ENCODE measurements at regions of chr17 and their contacts with region 1.

Region 1: DNA sequence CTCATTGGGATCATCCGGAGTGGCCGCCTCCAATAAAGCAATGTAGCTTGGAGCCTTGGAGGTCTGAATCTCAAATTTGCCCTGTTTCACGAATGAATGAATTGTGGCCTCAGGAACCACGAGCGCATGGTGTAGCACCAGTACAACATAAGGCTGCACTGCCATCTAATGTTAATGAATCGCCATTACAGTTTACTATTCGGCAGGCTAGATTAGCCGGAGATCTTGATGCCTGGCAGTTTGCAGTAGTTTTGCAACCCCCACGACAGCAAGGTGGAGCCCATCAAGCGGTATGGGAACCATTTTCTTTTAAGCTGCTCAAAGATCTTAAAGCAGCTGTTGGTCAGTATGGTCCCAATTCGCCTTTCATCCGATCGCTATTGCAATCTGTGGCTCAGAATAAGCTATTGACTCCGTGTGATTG is 18.8 kb downstream of the ALOX15B start:
- DNase-seq: peak; percentile 26 to 31
- ATAC-seq: peak; percentile 89 to 91
- H3K4me3 ChIP-seq: no peak overlapping the region
- H3K27ac ChIP-seq: no peak overlapping the region
- H3K4me1 ChIP-seq: peaks cover 5 to 6% of the 10 kb centered on the region in 2 donors
- H3K27me3 ChIP-seq: peaks cover 25 to 43% (median 40%) of the 10 kb centered on the region in 3 donors
- CTCF ChIP-seq: peak; percentile 40 to 80 (median 79)
- POLR2A ChIP-seq: no peak

Region 2: DNA sequence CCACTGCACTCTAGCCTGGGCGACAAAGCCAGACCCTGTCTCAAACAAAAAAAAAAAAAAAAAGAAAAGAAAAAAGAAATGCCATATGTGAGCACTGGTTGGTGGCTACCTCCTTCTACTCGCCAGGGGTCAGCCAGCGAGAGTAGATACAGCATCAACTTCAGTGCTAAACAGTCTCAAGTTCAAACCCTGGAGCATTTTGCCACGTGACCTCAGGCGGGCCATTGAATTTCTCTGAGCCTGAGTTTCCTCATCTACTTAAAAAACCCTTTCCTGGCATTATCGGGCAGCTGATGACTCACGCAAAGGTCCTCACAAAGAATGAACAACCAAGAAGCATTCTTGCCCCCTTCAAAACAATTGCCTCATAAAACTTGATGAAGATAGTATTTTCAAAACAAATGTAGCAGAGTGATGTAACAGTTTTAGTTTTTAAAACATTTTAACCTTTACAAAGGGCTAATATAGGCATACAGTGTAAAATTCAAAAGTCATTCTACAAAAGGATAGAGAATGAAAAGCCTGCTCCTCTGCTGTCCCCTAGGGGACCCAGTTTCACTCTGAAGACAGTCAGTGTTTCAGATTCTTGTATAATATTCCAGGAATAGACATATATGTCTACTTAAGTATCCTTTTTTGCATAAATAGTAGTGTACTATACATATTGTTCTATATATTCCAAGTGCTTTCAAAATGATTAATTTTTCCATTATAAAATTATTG is 311.8 kb before region 1 on chr17:
- in situ Hi-C with region 1: no loop called
- intact Hi-C with region 1: loop called (anchors 10 kb)
- DNase-seq: no peak
- ATAC-seq: peak in 1 of 2 donors; percentile 36
- H3K4me3 ChIP-seq: no peak overlapping the region
- H3K27ac ChIP-seq: no peak overlapping the region
- H3K4me1 ChIP-seq: no peaks in the 10 kb centered on the region
- H3K27me3 ChIP-seq: peaks cover 0 to 7% (median 0%) of the 10 kb centered on the region in 3 donors
- CTCF ChIP-seq: no peak
- POLR2A ChIP-seq: no peak

Region 3: DNA sequence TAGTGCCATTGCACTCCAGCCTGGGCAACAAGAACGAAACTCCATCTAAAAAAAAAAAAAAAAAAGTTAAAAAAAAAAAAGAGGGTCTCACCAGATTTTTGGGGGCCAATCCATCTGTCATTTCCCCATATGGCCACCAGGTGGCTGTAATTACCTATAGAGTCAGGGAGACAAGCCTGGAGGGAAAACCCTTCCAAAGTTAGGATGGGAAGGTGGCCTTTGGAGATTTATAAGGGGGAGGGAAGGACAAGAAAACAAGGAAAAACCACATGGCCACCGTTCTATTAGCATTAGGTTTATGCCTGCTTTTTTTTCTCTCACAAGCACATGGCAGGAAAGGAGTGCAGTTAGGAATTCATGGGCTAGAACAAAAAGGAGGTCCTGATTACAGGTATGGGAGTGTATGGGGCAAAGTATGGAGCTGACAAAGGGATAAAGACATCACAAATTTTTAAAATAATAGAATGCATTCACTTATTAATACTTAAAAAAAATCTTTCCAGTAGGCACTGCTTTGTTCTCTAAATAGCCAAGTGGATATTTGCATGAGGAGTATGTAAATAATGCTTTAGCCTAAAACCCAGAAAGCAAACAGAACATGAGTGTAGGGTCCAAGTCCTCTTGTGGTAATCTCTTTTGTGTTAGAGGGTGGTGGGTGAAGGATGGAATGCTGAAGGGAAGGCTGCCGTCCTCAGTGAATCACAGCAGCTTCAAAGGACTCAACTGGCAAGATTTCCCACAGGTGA is 194.8 kb before region 1 on chr17:
- in situ Hi-C with region 1: no loop called
- intact Hi-C with region 1: loop called (anchors 5 kb)
- DNase-seq: no peak
- ATAC-seq: no peak
- H3K4me3 ChIP-seq: no peak overlapping the region
- H3K27ac ChIP-seq: no peak overlapping the region
- H3K4me1 ChIP-seq: peaks cover 9 to 19% of the 10 kb centered on the region in 2 donors
- H3K27me3 ChIP-seq: no peaks in the 10 kb centered on the region
- CTCF ChIP-seq: peak; percentile 76 to 88 (median 84)
- POLR2A ChIP-seq: no peak

Region 4: GRCh38 chr17:7887482-7888183 is 170.1 kb before region 1 on chr17:
- in situ Hi-C with region 1: no loop called
- intact Hi-C with region 1: loop called (anchors 10 kb)
- DNase-seq: peak; percentile 65 to 80
- ATAC-seq: peak; percentile 61 to 72
- H3K4me3 ChIP-seq: peak overlapping the region; percentile 64 to 74 (median 68)
- H3K27ac ChIP-seq: peak overlapping the region; percentile 77 to 89 (median 81)
- H3K4me1 ChIP-seq: peaks cover 41 to 47% of the 10 kb centered on the region in 2 donors
- H3K27me3 ChIP-seq: peaks cover 24 to 27% (median 25%) of the 10 kb centered on the region in 3 donors
- CTCF ChIP-seq: peak in 1 of 5 experiments; percentile 5
- POLR2A ChIP-seq: peak in 1 of 2 donors; percentile 55

Region 5: DNA sequence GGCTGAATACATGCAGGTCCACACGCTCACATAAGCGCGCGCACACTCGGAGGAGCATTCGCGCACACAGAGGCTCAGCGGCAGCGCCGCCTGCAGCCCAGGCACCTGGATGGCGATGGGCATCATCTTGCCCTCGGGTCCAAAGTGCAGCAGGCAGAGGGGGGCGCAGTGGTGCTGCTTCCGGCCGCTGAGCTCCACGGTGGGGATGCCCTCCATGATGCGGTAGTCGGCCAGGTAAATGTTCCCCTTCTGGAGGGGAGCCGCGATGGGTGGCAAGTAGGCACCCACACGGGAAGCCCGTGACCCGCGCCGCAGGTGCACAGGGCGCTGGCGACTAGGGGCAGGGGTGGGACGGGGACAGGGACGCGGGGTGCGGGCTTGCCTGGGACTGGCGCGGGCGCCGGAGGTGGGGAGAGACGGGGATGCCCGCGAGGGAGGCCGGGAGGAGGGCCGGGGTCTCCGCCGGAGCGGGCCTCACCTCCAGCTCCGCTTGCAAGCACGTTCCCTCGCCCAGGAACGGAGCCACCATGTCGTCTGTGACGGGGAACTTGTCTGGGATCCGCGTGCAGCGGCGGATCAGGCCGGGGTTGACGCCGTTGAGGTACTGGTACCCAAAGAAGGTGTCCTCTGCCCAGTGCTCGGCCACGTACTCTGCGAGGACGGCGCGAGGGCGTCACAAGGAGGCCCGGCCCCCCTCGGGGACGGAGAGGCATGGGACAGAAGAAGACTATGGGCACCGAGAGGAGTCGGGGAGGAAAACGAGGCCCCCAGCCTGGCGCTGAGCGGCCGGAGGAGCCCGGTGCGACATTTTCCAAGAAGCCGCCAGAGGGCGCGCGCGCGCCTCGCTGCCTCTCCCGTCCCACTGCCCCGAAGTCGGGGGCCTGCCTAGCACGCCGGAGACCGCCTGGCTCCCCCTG is 21.8 kb after region 1 on chr17:
- in situ Hi-C with region 1: no loop called
- intact Hi-C with region 1: loop called (anchors 2 kb)
- DNase-seq: peak; percentile 15 to 38
- ATAC-seq: peak; percentile 91 to 94
- H3K4me3 ChIP-seq: peak overlapping the region; percentile 49 to 72 (median 53)
- H3K27ac ChIP-seq: no peak overlapping the region
- H3K4me1 ChIP-seq: peaks cover 4 to 13% of the 10 kb centered on the region in 2 donors
- H3K27me3 ChIP-seq: peaks cover 42 to 58% (median 57%) of the 10 kb centered on the region in 3 donors
- CTCF ChIP-seq: peak; percentile 68 to 93 (median 84)
- POLR2A ChIP-seq: no peak

Region 6: DNA sequence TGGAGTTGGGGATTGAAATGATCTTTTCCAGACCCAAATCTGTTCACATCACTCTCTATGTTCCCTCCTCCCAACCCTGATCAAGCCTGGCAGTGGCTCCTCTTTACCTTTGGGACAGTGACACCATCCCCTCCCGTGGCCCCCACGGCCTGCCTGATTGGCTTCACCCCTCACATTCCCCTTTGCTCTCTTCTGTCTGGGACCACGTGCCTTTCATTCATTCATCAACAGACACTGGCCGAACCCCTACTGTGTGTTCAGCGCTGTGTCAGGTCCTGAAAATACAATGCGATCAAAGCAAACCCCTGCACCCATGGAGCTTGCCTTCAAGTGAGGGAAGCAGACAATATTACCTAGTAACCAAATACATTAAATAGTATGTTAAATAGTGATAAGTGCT is 32.0 kb after region 1 on chr17:
- in situ Hi-C with region 1: no loop called
- intact Hi-C with region 1: no loop called
- DNase-seq: no peak
- ATAC-seq: no peak
- H3K4me3 ChIP-seq: no peak overlapping the region
- H3K27ac ChIP-seq: no peak overlapping the region
- H3K4me1 ChIP-seq: no peaks in the 10 kb centered on the region
- H3K27me3 ChIP-seq: peaks cover 6 to 25% (median 18%) of the 10 kb centered on the region in 3 donors
- CTCF ChIP-seq: no peak
- POLR2A ChIP-seq: no peak

Region 7: GRCh38 chr17:8300627-8301242 is 243.0 kb after region 1 on chr17:
- in situ Hi-C with region 1: no loop called
- intact Hi-C with region 1: loop called (anchors 5 kb)
- DNase-seq: peak; percentile 26 to 47
- ATAC-seq: peak; percentile 93
- H3K4me3 ChIP-seq: no peak overlapping the region
- H3K27ac ChIP-seq: no peak overlapping the region
- H3K4me1 ChIP-seq: no peaks in the 10 kb centered on the region
- H3K27me3 ChIP-seq: no peaks in the 10 kb centered on the region
- CTCF ChIP-seq: peak; percentile 63 to 85 (median 80)
- POLR2A ChIP-seq: no peak